AG04450 (cell line): ENCODE measurements at regions of chr2 and their contacts with region 1.

Region 1: DNA sequence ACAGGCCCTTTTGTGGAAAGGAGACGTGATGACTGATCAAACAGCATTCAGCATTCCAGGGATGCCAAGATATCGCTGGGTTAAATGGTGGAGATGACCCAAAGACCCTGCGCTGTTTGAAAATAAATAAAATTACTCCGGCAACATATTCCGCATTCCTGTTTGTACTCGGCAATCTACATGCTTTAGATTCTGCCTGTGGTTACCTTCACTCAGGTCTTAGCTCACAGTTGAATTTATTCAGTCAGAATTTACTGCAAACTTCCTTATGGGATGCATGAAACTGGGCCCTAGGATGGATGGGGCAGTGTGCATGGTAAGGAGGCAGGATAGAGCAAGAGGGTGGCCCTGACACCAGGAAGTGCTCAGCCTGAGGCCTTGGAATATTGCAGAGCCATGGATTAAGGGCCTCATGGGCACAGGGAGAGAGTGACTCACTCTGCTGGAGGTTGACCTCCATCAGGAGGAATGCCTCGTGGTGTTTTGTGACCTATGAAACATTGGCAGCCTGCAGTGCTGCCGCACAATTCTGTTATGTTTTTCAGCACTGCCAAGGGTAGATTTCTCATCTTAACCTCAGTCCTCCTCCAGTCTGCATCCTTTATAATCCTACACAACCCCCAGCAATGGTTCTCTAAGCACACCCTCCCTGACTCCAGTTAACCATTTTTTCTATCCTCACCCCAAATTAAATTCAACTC is 321.4 kb downstream of the IRS1 start:
- DNase-seq: peak; percentile 82
- H3K4me3 ChIP-seq: no peak overlapping the region
- H3K27ac ChIP-seq: peak overlapping the region; percentile 93
- H3K27me3 ChIP-seq: no peaks in the 10 kb centered on the region
- CTCF ChIP-seq: no peak

Region 2: DNA sequence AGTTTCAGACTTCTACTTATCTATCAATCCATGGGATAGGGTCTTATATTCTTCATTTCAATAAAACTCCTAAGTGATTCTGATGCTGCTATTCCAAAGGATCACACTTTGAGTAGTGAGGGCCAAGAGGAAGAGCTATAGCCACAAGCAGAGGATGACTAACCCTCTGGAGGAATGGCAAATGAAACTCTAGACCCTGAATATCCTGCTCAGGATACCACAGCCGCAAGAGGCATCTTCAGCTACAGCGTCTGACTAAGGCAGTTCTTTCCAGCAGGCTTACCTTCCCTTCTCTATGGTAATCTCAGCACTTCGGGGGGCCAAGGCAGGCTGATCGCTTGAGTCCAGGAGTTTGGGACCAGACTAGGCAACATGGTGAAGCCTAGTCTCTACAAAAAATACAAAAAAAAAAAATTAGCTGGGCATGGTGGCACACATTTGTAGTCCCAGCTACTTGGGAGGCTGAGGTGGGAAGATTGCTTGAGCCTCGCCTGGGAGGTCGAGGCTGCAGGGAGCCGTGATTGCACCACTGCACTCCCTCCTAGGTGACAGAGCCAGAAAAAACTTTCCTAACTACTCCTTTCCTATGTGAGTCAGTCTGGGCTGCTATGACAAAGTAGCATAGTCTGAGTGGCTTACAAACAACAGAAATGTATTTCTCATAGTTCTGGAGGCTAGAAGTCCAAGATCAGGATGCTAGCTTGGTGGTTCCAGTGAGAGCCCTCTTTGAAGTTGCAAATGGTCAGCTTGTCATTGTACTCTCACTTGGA is 50.5 kb before region 1 on chr2:
- CTCF ChIA-PET with region 1: no interaction called
- POLR2A ChIA-PET with region 1: interaction called, 16 read pairs
- DNase-seq: peak; percentile 86
- H3K4me3 ChIP-seq: peak overlapping the region; percentile 14
- H3K27ac ChIP-seq: peak overlapping the region; percentile 93
- H3K27me3 ChIP-seq: no peaks in the 10 kb centered on the region
- CTCF ChIP-seq: peak; percentile 35

Region 3: DNA sequence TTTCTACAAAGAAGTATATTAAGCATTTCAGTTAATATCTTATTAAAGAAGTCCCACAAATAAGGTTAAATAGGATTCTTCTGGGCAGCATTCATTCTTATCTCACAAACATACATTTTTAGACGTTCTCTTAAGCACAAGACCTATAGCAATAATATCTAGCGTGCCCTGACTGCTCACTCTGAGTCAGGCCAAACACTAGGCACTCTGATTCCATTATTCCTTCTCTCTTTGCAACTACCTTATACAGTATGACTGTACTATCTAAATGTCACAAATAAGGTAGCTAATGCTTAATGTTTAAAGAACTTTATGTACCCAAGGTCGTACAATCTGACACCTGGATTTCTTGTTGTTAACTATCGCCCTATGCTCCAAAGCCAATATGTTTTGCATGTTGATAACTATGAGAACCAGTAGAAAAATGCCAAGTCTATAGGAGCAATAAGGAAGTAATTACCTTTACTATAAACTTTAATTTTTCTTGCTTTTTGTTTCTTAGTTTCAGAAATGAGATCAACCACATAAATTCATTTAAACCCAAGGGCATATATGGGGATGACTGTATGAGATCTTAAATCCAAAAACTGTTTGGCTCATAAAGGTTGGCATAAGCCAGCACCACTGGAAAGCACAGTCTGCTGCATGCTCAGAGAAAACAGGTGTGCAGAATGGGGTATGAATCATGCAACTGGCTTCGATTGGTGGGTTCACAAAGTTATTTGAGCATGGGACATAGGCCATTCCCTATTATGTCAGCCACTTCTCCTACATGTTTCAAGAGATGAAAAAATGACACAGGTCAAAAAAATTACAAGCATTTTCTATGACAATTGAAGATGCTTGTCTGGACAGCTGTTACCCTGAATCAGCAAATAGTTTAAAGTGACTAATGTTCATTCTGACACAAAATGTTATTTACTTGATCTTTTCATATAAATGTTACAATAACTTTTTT is 30.6 kb before region 1 on chr2:
- CTCF ChIA-PET with region 1: interaction called, 4 read pairs
- POLR2A ChIA-PET with region 1: interaction called, 16 read pairs
- DNase-seq: no peak
- H3K4me3 ChIP-seq: no peak overlapping the region
- H3K27ac ChIP-seq: no peak overlapping the region
- H3K27me3 ChIP-seq: no peaks in the 10 kb centered on the region
- CTCF ChIP-seq: no peak

Region 4: DNA sequence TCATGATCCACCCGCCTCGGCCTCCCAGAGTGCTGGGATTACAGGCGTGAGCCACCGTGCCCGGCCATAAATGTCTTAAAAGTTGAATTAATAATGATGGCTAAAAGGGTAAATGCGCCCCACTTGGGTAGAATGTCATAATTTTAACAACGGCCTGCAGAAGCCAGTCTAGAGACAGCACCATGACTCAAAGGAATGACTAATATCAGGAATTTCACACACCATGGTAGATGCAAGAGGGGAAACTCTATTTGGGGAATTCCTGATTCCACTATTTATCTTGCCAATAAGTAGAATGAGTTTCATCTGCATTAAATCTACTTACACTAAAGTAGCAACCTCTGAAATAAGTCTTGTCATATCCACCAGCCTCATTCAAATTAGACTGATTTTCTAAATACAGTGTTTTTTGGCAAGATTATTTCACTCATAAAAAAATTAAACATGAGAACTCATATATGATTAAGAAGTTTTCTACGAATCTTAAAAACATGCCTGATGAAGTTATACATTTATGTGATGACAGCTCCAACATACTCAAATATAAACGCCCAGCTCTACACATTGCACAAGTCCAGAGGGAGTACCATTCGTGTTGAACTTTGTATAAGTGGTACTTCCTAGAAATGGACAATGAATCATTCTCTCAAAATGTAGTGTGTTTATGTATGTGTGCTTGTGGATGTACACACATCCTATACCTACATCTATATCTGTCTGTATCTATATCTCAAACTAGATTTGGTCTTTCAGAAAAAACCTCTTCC is 11.7 kb after region 1 on chr2:
- CTCF ChIA-PET with region 1: no interaction called
- POLR2A ChIA-PET with region 1: no interaction called
- DNase-seq: peak; percentile 51
- H3K4me3 ChIP-seq: no peak overlapping the region
- H3K27ac ChIP-seq: no peak overlapping the region
- H3K27me3 ChIP-seq: no peaks in the 10 kb centered on the region
- CTCF ChIP-seq: no peak

Region 5: DNA sequence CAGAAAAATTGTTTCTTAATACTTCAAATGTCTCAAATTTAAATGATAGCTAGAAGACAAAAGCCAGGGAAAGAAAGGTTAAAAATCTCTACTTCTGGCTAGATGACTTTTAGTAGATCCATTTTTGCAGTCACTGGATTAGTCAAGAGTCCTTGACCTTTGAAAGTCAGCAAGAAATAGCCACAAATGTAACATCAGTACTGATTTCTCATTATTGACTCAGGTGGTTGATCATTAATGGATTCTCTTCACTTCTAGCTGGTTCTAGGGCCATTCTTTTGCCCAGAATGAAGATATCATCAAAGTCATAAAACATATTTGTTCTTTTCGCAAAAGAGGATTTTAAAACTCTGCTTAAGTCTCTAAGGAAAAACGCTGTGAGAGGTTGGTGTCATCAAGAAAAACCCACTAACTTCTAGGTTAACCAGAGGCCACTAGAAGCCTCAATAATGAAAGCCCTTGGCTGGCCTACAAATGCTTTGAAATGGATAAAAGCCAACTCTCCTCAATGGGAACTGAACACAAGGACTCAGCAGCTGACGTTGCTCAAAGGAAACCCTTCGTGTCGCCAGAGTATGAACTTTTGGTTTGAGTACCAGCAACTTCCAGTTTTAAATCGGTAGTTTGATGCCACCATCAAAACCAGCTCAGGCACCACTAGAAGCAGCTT is 255.1 kb after region 1 on chr2:
- CTCF ChIA-PET with region 1: no interaction called
- POLR2A ChIA-PET with region 1: no interaction called
- DNase-seq: no peak
- H3K4me3 ChIP-seq: no peak overlapping the region
- H3K27ac ChIP-seq: no peak overlapping the region
- H3K27me3 ChIP-seq: no peaks in the 10 kb centered on the region
- CTCF ChIP-seq: no peak